Naive thymus-derived CD8-positive, alpha-beta T cell (primary cell): ENCODE measurements at regions of chr6 and their contacts with region 1.

Region 1: GRCh38 chr6:110815217-110816109 is at the start of gene CDK19:
- DNase-seq: peak; percentile 93 to 99 (median 99)
- ATAC-seq: peak; percentile 81 to 84
- H3K4me3 Mint-ChIP-seq: peak within 1 kb of the TSS; percentile 93 to 100 (median 98)
- H3K27ac Mint-ChIP-seq: peak within 1 kb of the TSS; percentile 96 to 100 (median 99)
- H3K4me1 Mint-ChIP-seq: peaks cover 15 to 38% (median 26%) of the 10 kb centered on the region in 4 donors
- H3K27me3 Mint-ChIP-seq: peaks cover 0 to 4% (median 0%) of the 10 kb centered on the region in 5 donors
- polyA plus RNA-seq, gene CDK19: 1.1 to 2.1 (median 1.5) TPM

Region 2: DNA sequence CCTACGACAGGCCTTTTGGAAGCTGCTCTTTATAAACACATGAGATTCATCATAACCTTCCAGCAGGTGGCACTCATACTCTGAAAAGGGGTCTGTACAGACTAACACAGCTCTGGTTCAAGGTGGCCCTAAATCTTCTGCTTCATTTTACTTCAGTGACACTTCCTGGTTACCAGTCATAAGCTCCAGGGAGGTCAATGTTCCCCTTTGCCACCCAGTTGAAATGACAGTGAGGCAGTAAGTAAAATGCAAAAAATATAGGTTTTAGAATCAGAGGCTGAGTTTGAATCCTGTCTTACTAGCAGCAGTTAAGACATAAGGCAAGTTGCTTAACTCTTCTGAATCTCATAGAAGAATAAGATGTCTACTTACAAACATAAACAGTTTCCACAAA is 133.0 kb before region 1 on chr6:
- POLR2A ChIA-PET with region 1: interaction called, 16 read pairs
- DNase-seq: peak in 9 of 10 donors; percentile 48 to 87 (median 73)
- ATAC-seq: peak; percentile 99
- H3K4me3 Mint-ChIP-seq: no peak overlapping the region
- H3K27ac Mint-ChIP-seq: peak overlapping the region in 5 of 10 donors; percentile 49 to 78 (median 61)
- H3K4me1 Mint-ChIP-seq: peaks cover 3 to 24% (median 12%) of the 10 kb centered on the region in 4 donors
- H3K27me3 Mint-ChIP-seq: no peaks in the 10 kb centered on the region

Region 3: DNA sequence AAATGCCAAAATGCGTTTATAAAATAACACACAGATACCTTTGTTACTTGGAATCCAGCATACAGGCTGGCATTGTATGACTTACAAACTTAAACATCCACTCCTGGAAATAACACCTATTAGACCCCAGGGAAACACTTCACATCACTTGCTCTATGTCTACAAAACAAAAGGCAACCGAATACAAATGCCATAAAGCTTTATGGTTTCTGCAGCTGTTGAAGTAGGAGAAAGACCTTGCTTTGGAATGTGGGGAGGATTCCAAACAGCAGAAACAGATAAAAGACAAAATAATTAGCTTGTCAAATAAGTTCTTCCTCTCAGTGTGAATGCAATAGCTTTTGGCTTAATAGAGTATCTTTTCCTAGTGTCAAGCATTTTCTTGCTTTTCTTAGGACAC is 49.4 kb after region 1 on chr6:
- POLR2A ChIA-PET with region 1: interaction called, 14 read pairs
- DNase-seq: no peak
- ATAC-seq: no peak
- H3K4me3 Mint-ChIP-seq: no peak overlapping the region
- H3K27ac Mint-ChIP-seq: peak overlapping the region in 2 of 10 donors; percentile 11 to 19
- H3K4me1 Mint-ChIP-seq: peaks cover 1 to 14% (median 6%) of the 10 kb centered on the region in 4 donors
- H3K27me3 Mint-ChIP-seq: no peaks in the 10 kb centered on the region

Region 4: GRCh38 chr6:110873981-110874879 is 58.8 kb after region 1 on chr6 and contains the start of gene AMD1:
- POLR2A ChIA-PET with region 1: interaction called, 346 read pairs
- DNase-seq: peak; percentile 86 to 98 (median 96)
- ATAC-seq: peak; percentile 70 to 76
- H3K4me3 Mint-ChIP-seq: peak within 1 kb of the TSS; percentile 92 to 100 (median 99)
- H3K27ac Mint-ChIP-seq: peak within 1 kb of the TSS; percentile 97 to 100 (median 99)
- H3K4me1 Mint-ChIP-seq: peaks cover 13 to 33% (median 29%) of the 10 kb centered on the region in 4 donors
- H3K27me3 Mint-ChIP-seq: no peaks in the 10 kb centered on the region
- polyA plus RNA-seq, gene AMD1: 35.9 to 45.6 (median 44.7) TPM

Region 5: DNA sequence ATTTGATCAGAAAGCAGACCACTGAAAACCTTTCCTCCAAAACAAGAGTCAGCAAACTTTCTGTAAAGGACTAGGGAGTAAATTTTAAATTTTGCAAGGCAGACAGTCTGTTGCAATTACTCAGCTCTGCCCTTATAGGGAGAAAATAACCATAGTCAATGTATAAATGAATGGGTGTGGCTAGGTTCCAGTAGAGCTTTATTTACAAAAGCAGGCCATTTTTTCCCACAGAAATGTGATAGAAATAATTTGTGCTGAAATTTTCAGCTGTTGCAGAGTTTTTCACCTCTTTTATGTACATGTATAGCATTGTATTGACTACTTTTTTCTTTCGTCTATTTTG is 66.8 kb after region 1 on chr6:
- POLR2A ChIA-PET with region 1: interaction called, 346 read pairs
- DNase-seq: no peak
- ATAC-seq: no peak
- H3K4me3 Mint-ChIP-seq: peak overlapping the region in 8 of 10 donors; percentile 26 to 77 (median 54)
- H3K27ac Mint-ChIP-seq: peak overlapping the region in 5 of 10 donors; percentile 53 to 74 (median 70)
- H3K4me1 Mint-ChIP-seq: peaks cover 32 to 99% (median 91%) of the 10 kb centered on the region in 4 donors
- H3K27me3 Mint-ChIP-seq: no peaks in the 10 kb centered on the region

Region 6: DNA sequence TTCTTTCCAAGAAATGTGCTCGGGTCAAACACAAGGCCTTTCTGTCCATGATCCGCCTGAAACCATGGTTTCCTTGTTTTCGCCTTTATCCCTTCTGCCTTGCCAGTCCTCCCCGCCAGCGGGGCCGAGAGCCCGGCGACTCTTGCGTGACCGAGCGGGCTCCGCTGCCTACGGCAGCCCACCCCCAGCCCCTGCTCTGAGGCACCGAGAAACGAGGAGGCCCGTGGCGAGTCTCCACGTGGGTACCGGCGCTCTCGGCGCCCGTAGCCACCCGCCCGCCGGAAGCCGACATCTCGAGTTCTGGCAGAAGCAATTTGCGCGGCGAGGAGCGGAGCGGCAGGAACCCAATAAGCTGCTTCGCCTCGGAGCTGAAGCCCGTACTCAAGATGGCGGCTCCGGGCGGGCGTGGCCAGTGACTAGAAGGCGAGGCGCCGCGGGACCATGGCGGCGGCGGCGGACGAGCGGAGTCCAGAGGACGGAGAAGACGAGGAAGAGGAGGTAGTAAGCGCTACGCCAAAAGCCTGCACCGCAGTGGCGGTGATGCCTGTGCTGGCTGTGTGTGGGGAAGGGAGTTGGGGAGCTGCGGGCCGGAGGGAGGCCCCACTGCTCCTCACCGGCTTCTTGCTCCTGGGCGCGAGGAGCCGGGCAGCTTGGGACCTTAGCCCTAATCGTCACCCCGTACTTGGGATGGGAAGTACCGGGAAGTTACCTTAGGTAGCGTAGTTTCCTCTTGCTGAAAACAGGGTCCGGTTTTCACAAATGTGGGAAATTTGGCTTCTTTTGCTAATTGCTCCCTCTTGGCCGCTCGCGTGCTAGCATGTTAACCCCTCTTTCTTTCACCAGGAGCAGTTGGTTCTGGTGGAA is 143.1 kb after region 1 on chr6 and contains the start of gene GTF3C6:
- POLR2A ChIA-PET with region 1: interaction called, 45 read pairs
- DNase-seq: peak; percentile 84 to 95 (median 90)
- ATAC-seq: peak; percentile 99
- H3K4me3 Mint-ChIP-seq: peak within 1 kb of the TSS; percentile 96 to 99 (median 98)
- H3K27ac Mint-ChIP-seq: peak within 1 kb of the TSS; percentile 97 to 100 (median 98)
- H3K4me1 Mint-ChIP-seq: peaks cover 9 to 24% (median 20%) of the 10 kb centered on the region in 4 donors
- H3K27me3 Mint-ChIP-seq: peaks cover 0 to 4% (median 3%) of the 10 kb centered on the region in 5 donors
- polyA plus RNA-seq, gene GTF3C6: 93.4 to 100 (median 98.5) TPM

Region 7: GRCh38 chr6:110981202-110981600 is 165.7 kb after region 1 on chr6:
- POLR2A ChIA-PET with region 1: interaction called, 11 read pairs
- DNase-seq: peak in 1 of 10 donors; percentile 32
- ATAC-seq: no peak
- H3K4me3 Mint-ChIP-seq: peak overlapping the region; percentile 93 to 99 (median 98)
- H3K27ac Mint-ChIP-seq: peak overlapping the region; percentile 95 to 100 (median 99)
- H3K4me1 Mint-ChIP-seq: peaks cover 20 to 44% (median 43%) of the 10 kb centered on the region in 4 donors
- H3K27me3 Mint-ChIP-seq: no peaks in the 10 kb centered on the region